ENCODE measurements at regions of chr2 and their contacts with region 1.

Region 1: DNA sequence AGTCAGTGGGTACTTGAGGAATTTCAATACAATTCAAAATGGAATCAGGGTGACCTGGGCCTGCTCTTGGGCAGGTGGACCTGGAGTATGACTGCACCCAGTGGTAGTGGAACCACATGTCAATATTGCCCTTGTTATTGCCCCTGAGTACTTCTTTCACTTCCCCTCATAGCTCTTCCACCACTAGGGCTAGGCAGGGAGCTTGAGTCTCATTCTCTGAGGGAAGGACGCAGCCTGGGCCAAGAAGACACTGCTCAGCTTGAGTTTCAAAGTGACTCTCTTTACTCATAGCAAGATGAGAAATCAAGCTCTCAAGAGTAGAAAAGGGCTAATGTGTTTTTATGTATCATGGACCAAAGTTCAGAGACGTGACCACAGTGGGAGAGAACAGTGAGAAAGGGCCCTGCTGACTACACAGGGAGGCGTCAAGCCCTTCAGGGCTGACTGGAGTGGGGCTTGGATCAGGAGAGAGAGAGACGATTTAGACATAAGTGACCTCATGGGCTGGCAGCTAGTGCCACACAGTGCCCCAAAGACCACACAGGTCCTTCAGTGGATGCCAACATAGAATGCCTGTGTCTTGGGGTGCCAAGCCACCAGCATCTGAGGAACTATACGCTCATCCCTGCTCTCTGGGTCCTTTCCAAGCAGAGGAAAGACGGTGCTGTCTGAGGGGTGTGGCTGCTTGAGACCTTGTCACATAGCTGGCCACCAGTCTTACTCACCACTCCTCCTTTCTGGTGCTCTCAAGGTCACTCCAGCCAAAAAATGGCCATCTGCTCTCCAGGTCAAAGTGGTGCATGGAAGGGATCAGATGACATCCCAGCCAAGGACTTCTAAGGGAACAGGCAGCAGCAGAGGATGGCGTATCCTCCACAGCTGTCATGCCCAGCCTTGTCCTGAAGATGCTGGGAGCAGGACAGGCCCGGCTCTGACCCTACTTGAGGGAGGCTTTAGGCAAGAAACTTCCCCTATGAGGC is 13.0 kb downstream of the PTMA start:
- DNase-seq: no peak
- ATAC-seq: no peak
- H3K4me3 ChIP-seq: no peak overlapping the region
- H3K27ac ChIP-seq: no peak overlapping the region
- H3K4me1 ChIP-seq: peaks cover 0 to 26% (median 9%) of the 10 kb centered on the region in 12 donors
- H3K27me3 ChIP-seq: no peaks in the 10 kb centered on the region
- CTCF ChIP-seq: no peak
- POLR2A ChIP-seq: no peak

Region 2: GRCh38 chr2:231769170-231770136 is 48.2 kb after region 1 on chr2:
- intact Hi-C with region 1: loop called in 1 of 10 experiments (anchors 5 kb)
- DNase-seq: no peak
- ATAC-seq: no peak
- H3K4me3 ChIP-seq: no peak overlapping the region
- H3K27ac ChIP-seq: no peak overlapping the region
- H3K4me1 ChIP-seq: peaks cover 0 to 6% (median 2%) of the 10 kb centered on the region in 12 donors
- H3K27me3 ChIP-seq: no peaks in the 10 kb centered on the region
- CTCF ChIP-seq: no peak
- POLR2A ChIP-seq: no peak

Measured in heart left ventricle (tissue), 16 donors.